ENCODE measurements at regions of chr19 and their contacts with region 1.

Region 1: DNA sequence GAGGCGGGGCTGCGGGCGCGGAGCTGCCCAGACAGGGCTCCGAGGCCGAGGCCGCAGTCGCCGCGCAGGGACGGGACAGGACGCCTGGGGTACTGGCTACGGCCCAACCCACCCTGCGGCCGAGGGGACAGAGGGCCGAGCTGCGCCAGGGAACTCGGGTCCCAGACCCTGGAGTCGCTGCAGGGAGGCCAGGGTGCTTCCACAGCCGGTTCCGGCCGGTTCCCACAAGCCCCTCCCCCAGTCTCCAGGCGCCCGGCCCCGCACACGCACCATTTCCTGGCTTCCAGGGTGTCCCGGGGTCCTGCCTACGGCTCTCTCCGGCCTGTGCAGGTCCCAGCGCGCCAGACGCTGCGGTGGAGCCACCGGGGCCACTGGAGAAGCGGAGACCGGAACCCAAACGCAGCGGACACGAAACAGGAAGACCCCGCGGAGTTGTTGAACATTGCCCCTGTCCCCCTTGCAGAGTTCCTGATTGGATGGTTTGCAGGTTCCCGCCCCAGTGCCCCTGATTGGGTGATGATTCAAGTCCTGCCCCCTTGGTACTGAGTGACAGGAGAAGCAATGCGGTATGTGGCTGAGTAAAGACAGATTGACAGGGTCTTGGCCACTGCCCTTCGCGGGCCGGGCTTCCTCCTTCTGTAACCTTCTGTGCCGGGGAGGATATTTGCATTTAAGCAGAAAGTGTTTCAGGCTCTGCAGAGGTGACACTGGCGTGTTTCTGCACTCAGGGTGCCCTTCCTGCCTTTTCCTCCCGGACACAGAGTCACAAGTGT is at the start of gene ZNF564:
- DNase-seq: peak; percentile 97 to 98
- ATAC-seq: peak; percentile 98
- H3K4me3 ChIP-seq: peak within 1 kb of the TSS; percentile 76 to 92 (median 86)
- H3K27ac ChIP-seq: peak within 1 kb of the TSS; percentile 92 to 97 (median 94)
- H3K4me1 ChIP-seq: peaks cover 25% of the 10 kb centered on the region in 2 donors
- H3K27me3 ChIP-seq: no peaks in the 10 kb centered on the region
- CTCF ChIP-seq: no peak
- POLR2A ChIP-seq: peak; percentile 49 to 82
- total RNA-seq, gene ZNF564: 3.3 to 5.0 (median 4.5) TPM

Region 2: GRCh38 chr19:12294249-12295158 is 256.7 kb before region 1 on chr19 and contains the start of gene ZNF44:
- in situ Hi-C with region 1: no loop called
- intact Hi-C with region 1: loop called (anchors 5 kb)
- DNase-seq: peak; percentile 97 to 99
- ATAC-seq: peak; percentile 99 to 100
- H3K4me3 ChIP-seq: peak within 1 kb of the TSS; percentile 72 to 92 (median 88)
- H3K27ac ChIP-seq: peak within 1 kb of the TSS; percentile 84 to 96 (median 93)
- H3K4me1 ChIP-seq: peaks cover 9 to 18% of the 10 kb centered on the region in 2 donors
- H3K27me3 ChIP-seq: no peaks in the 10 kb centered on the region
- CTCF ChIP-seq: peak in 1 of 5 experiments; percentile 11
- POLR2A ChIP-seq: peak; percentile 75 to 78
- total RNA-seq, gene ZNF44: 2.6 to 4.0 (median 3.5) TPM

Region 3: GRCh38 chr19:12440541-12441316 is 110.5 kb before region 1 on chr19 and contains the start of gene ZNF443:
- in situ Hi-C with region 1: no loop called
- intact Hi-C with region 1: loop called (anchors 1 kb)
- DNase-seq: peak; percentile 96 to 98
- ATAC-seq: peak; percentile 98 to 99
- H3K4me3 ChIP-seq: peak within 1 kb of the TSS; percentile 78 to 83 (median 80)
- H3K27ac ChIP-seq: peak within 1 kb of the TSS; percentile 81 to 89 (median 84)
- H3K4me1 ChIP-seq: peaks cover 0 to 9% of the 10 kb centered on the region in 2 donors
- H3K27me3 ChIP-seq: no peaks in the 10 kb centered on the region
- CTCF ChIP-seq: no peak
- POLR2A ChIP-seq: peak; percentile 45 to 57
- total RNA-seq, gene ZNF443: 0.95 to 2.3 (median 1.7) TPM

Region 4: DNA sequence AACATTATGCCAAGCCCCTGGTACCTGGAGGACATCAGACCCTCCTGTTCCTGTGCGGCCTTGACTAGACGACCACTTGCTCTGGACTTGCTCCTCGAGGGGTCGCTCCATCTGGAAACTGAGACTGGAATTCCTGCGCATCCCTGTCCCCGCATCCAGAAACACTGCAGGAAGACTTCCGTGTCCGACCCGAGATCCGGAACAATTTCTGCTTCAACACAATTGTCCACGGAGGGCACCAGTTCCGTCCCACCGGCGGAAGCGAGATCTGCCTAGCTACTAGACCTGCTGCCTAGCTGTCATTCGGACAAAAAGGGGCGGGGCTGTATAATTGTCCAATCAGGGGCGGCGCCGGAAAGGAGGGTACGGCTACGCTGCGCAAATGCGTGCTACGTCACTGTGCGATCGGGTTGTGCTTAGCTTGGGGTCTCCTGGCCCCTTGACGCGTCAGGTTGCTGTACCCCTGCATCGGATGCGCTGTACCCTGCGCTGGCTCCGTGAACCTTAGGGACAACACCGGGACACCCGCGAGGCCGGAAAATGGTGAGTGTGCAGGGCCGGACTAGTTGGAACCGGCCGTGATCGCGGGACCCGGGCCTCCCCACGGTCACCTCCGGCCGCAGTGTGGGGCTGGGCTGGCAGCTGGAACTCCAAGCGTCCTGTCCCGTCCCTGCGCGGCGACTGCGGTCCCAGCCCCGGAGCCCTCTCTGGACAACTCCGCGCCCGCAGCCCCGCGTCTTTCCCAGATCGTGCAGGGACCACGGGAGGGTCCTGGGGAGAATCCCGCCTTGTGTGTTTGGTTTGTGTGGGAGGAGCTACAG is 59.5 kb after region 1 on chr19 and contains the starts of genes ZNF490 and ZNF791:
- in situ Hi-C with region 1: no loop called
- intact Hi-C with region 1: loop called (anchors 1 kb)
- DNase-seq: peak; percentile 99
- ATAC-seq: peak; percentile 99 to 100
- H3K4me3 ChIP-seq: peak within 1 kb of the TSS; percentile 81 to 100 (median 91)
- H3K27ac ChIP-seq: peak within 1 kb of the TSS; percentile 98 to 100 (median 99)
- H3K4me1 ChIP-seq: peaks cover 23 to 45% of the 10 kb centered on the region in 2 donors
- H3K27me3 ChIP-seq: no peaks in the 10 kb centered on the region
- CTCF ChIP-seq: no peak
- POLR2A ChIP-seq: peak; percentile 90 to 95
- total RNA-seq, gene ZNF490: 2.5 to 4.9 (median 2.9) TPM
- total RNA-seq, gene ZNF791: 7.6 to 10.9 (median 8.8) TPM

Region 5: DNA sequence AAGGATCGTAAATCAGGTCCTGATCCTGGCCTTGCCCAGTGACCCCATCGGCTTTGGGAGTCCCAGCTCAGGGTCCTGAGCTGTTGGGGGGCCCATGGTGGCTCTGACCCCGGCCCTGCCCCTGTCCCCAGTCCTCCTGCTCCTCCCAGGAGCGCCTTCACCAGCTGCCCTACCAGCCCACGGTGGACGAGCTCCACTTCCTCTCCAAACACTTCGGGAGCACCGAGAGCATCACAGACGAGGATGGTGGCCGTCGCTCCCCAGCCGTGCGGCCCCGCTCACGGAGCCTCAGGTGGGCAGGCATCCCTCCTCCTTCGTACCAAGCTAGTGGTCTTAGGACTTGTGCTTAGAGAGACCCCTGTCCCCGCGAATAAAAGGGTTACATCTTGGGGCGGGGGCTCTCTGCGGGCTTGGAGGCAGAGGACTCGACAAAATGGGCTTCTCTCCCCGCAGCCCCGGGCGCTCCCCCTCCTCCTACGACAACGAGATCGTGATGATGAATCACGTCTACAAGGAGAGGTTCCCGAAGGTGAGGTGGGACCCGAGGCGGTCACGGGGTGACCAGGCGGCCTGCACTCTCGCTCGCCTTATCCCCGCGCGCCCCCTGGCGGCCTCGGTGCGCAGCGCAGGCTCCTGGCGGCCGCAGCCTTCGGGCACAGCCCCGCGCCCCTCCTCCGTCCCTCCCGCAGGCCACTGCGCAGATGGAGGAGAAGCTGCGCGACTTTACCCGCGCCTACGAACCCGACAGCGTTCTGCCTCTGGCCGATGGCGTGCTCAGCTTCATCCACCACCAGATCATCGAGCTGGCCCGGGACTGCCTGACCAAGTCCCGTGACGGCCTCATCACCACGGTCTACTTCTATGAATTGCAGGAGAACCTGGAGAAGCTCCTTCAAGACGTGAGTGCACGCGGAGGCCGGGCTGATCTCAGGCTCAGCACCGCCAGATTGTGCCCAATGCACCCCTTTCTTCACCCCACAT is 296.2 kb after region 1 on chr19:
- in situ Hi-C with region 1: no loop called
- intact Hi-C with region 1: no loop called
- DNase-seq: peak; percentile 57 to 78
- ATAC-seq: peak; percentile 90 to 93
- H3K4me3 ChIP-seq: peak overlapping the region in 3 of 4 donors; percentile 23 to 39 (median 24)
- H3K27ac ChIP-seq: peak overlapping the region in 1 of 4 donors; percentile 28
- H3K4me1 ChIP-seq: peaks cover 5 to 6% of the 10 kb centered on the region in 2 donors
- H3K27me3 ChIP-seq: peaks cover 19 to 22% (median 19%) of the 10 kb centered on the region in 3 donors
- CTCF ChIP-seq: peak; percentile 95 to 99 (median 98)
- POLR2A ChIP-seq: no peak

Region 6: DNA sequence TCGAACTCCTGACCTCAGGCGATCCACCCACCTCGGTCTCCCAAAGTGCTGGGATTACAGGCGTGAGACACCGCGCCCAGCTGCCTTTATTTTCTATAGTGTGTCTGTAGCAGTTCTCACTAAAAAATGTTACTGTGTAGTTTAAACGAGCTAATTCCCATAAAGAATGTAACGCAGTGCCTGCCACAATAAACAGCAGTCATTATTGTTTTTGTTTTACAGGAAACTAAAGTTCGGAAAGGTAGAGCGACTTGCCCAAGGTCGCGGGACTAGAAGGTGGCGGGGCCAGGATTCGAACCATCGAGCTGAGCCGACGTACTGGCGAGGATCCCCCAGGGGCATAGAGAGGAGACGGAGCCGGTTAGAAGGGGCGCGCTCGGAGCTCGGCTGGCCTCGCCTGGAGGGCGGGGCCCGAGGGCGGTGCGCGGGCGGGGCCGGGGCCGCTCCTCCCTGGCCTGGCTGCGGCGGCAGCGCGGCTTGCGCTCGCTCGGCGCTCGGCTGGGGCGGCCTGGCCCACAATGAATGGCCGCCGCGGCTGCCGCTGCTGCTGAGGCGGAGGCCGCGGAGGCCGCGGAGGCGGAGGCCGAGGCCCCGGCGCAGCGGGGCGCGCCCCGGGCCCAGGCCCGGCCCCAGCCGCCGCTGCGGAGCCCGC is 566.7 kb after region 1 on chr19 and contains the start of gene NACC1:
- in situ Hi-C with region 1: no loop called
- intact Hi-C with region 1: no loop called
- DNase-seq: peak; percentile 82 to 88
- ATAC-seq: peak; percentile 82 to 83
- H3K4me3 ChIP-seq: peak within 1 kb of the TSS; percentile 90 to 100 (median 94)
- H3K27ac ChIP-seq: peak within 1 kb of the TSS; percentile 79 to 93 (median 86)
- H3K4me1 ChIP-seq: peaks cover 28 to 36% of the 10 kb centered on the region in 2 donors
- H3K27me3 ChIP-seq: no peaks in the 10 kb centered on the region
- CTCF ChIP-seq: peak in 1 of 5 experiments; percentile 11
- POLR2A ChIP-seq: no peak
- total RNA-seq, gene NACC1: 36.3 to 81.3 (median 49.4) TPM

Measured in gastrocnemius medialis (tissue), 4 donors.